AG04450 (cell line): ENCODE measurements at regions of chr1 and their contacts with region 1.

Region 1: GRCh38 chr1:66253330-66253921 is 280.5 kb upstream of the SGIP1 start:
- DNase-seq: peak; percentile 52
- H3K4me3 ChIP-seq: no peak overlapping the region
- H3K27ac ChIP-seq: no peak overlapping the region
- H3K27me3 ChIP-seq: no peaks in the 10 kb centered on the region
- CTCF ChIP-seq: peak; percentile 80

Region 2: GRCh38 chr1:65958561-65959350 is 294.7 kb before region 1 on chr1:
- CTCF ChIA-PET with region 1: interaction called, 12 read pairs
- POLR2A ChIA-PET with region 1: no interaction called
- DNase-seq: peak; percentile 21
- H3K4me3 ChIP-seq: no peak overlapping the region
- H3K27ac ChIP-seq: no peak overlapping the region
- H3K27me3 ChIP-seq: no peaks in the 10 kb centered on the region
- CTCF ChIP-seq: peak; percentile 66

Region 3: DNA sequence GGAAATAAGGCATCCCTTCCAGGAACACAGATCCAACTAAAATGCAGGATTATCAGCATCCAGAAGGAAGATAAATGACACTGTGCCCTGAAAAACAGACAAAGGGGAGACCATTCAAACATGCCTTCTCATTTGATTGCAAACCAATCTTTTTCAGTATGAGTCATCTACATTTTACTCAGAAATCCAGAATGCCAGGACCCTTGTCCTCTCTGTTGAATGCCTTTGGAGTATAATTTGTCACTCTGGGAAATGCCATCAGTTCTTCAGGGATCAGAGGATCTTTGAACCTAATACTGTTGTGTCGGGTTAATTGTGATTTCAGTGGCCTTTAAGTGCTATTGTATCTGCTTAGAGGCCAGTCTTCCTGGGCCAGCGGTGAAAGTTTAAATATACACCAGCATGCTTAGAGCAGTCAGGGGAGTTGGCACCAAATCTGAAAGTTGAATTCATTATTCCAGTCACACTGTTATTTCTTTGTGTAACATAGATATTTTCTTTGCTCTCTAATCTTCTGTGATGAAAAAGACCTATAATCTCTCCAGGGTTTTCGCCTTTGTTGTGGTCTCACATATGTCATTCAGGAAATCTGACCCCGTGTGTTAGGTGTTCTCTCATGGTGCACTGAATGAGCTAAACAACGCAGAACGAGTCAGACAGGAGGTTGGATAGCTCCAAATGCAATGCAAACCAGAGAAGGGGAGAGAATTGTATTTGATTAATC is 84.3 kb before region 1 on chr1:
- CTCF ChIA-PET with region 1: no interaction called
- POLR2A ChIA-PET with region 1: no interaction called
- DNase-seq: no peak
- H3K4me3 ChIP-seq: no peak overlapping the region
- H3K27ac ChIP-seq: no peak overlapping the region
- H3K27me3 ChIP-seq: no peaks in the 10 kb centered on the region
- CTCF ChIP-seq: no peak

Region 4: DNA sequence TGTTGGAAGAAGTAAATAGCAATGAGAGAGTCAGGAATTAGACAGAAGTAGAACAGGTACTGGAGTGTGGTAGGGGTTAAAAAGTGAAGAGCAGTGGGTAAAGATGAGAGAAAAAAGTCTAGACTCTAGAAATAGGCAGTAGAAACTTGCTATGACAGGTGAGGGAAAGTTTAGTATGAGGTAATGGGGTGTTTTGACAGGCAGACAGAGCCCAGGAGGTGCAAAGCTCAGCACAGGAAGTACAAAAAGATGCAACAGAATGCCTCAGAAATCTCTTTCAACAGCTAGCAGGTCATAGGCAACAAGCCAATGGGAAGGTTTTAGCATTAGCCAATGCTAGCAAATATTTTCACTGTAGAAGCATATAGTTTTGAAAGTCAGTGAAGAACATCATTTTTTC is 38.5 kb before region 1 on chr1:
- CTCF ChIA-PET with region 1: no interaction called
- POLR2A ChIA-PET with region 1: no interaction called
- DNase-seq: no peak
- H3K4me3 ChIP-seq: no peak overlapping the region
- H3K27ac ChIP-seq: no peak overlapping the region
- H3K27me3 ChIP-seq: no peaks in the 10 kb centered on the region
- CTCF ChIP-seq: no peak

Region 5: DNA sequence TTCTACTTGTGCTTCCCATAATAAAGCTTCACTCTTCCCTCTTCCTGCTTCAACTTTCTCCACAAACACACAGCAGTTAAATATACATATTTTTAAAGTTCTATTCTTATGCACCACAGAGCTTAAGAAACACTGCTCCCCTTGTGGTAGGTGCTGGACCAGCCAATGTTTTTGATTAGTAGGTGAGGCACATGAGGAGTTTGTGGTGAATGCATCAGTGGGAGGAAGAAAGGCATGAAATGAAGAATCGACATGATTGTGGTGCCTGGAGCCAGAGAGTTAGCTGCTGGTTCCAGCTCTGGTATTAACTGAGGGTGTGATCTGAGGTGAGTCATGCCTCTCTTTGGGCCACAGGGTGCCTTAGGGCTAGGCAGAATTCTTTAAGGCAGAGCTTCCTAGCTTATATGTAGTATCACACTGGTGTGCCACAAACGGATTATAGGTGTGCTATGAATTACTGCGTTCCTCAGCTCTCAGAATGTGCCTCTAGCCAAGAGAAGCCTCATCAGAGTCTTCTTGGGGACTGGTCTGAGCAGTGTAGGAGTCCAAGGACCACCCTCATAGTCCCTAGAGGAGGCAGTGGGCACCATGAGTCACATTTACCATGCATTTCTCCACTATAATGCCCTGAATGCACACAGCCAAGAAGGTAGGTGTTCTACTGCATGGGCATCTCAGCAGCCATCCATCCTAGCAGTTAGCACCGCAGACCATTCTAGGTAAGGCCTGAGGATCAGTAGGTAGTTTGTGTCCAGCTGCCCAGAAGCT is 183.1 kb after region 1 on chr1:
- CTCF ChIA-PET with region 1: interaction called, 484 read pairs
- POLR2A ChIA-PET with region 1: no interaction called
- DNase-seq: peak; percentile 41
- H3K4me3 ChIP-seq: no peak overlapping the region
- H3K27ac ChIP-seq: no peak overlapping the region
- H3K27me3 ChIP-seq: no peaks in the 10 kb centered on the region
- CTCF ChIP-seq: peak; percentile 62

Region 6: DNA sequence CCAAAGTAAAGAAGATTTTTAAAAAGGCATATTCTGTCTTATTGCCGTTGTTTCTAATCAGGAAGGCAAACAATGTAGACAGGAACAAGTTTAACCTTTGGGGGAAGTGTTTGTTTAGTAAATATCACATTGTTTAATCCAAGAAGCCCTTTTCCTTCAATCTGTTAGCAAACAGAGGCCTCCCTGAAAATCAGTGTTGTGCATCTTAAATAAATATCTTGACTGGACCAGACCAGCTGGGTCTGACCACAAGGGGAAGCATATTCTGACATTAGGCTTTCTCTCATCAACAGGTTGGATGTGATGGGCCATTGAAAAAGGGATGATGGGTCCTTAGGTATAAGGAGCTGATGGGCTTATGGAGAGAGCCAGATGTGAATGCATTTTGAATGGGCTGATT is 198.7 kb after region 1 on chr1:
- CTCF ChIA-PET with region 1: interaction called, 484 read pairs
- POLR2A ChIA-PET with region 1: no interaction called
- DNase-seq: no peak
- H3K4me3 ChIP-seq: no peak overlapping the region
- H3K27ac ChIP-seq: no peak overlapping the region
- H3K27me3 ChIP-seq: no peaks in the 10 kb centered on the region
- CTCF ChIP-seq: peak; percentile 40